ENCODE measurements at regions of chr3 and their contacts with region 1.

Region 1: DNA sequence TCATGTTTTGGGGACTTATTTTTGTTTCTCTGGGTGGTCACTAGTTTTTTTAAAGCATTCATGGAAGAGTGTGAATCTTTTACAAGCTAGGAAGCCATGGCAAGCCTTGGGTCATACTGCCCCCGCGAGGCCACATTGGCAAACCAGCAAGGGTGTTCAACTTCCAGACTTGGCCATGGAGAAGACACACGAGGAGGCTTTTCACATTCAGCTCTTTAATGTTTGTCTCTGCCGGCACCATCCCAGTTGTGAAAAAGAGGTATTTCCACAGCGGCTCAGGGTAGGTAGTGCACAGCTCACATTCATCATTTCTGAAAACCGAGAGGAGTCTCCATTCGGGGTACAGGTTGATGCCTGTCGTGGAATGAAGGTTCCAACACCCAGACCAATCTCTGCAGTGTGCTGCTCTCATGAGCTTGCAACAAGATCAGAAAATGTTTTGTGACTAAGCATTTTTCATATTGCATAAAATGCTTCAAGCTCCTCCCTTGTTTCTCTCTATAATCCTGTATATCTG is 7.7 kb downstream of the CCR5 start:
- DNase-seq: peak; percentile 49 to 95 (median 72)

Region 2: DNA sequence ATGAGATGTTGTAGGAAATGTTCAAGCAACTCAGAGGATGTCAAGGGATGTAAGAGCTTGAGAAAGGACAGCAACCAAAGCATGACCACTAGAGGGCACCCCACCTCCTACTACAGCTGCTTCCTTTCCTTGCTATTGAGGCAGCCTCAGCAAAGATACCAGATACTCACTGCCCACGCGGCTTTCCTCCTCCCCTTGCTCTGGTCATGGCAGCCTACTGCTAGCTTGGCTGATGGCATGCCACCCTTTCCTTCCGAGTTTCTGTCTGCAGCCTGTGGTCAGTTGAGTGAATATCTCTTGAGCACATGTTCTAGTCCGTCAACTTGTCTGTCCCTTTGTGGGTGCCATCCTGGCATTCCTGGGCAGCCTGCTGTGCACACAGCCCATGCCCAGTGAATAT is 439.6 kb before region 1 on chr3:
- intact Hi-C with region 1: loop called (anchors 10 kb)
- DNase-seq: peak; percentile 71 to 97 (median 88)

Region 3: DNA sequence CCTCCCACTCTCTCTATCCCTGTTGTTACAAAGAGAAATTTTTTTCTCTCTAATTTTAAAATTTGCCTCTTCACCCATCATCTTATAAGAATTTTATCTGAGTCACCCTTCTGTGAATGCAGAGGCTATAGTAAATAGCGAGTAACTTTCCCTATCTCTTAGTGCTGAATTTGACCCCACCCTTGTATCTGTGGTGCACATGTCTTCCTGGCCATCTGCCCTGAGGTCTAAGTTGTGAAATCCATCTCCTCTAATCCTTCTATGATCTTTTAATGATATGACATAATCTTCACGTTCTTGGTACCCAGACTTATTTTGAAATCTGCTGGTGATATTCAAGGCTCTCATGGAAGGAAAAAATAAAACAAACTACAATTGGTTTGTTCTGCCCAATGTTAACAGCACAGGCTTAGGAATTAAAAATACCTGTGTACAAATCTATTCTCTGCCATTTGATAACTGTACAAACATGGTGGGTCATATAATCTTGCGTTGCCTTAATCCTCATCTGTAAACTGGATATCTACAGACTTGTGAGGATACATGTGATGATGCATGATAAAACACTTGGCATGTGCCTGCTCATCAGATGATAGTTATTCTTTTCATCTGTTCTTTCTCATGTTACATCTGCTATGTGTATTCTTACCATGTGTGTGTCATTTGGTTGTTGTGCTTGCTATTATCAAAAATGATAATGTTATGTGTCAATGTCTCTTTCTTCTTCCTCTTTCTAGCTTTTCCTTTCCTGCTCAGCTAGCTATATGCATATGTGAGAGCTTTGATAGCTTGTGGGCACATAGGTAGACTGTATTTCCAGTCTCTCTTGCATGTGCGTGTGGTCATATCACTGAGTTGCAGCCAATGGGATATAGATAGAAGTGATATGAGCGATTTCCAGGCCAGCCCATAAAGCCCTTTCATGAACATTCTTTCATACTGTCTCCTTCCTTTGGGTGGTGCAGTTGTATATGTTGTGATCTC is 149.9 kb before region 1 on chr3:
- intact Hi-C with region 1: loop called (anchors 10 kb)
- DNase-seq: no peak

Region 4: DNA sequence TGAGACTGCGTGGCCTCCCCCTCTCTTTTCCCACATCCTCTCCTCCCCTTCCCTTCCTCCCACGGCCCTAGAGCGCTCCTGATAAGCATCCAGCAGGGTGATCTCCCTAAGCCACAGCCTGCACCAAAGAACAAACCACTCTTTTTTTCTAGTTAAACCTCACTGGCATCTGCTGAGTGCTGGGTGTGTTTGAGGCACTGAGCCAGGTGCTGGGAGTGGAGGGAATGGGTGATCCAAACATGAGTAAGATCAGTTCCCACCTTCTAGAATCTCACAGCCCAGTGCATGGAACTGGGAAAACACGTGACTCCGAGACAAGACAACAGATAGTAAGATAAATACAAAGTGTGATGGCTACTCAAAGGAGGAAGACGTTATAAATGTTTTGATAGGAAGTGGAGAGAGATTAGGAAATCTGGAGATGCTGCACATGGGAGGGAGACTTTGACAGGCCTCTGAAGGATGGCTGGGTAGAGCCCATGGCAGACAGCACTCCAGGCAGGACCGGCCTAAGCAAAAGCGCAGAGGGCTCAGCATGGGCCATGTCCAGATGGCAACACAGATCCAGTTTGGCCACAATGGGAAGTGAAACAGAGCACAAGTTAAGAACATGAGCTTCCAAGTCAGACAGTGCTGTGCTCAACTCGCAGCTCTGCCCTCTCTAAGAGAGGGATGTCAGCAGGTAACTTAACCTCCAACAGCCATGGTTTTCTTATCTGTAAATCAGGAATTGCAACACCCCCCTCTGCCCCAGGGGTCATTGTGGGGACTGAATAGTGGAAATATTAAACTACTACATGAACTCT is 80.6 kb before region 1 on chr3:
- intact Hi-C with region 1: loop called (anchors 10 kb)
- DNase-seq: no peak

Region 5: GRCh38 chr3:46395210-46395731 is 16.8 kb after region 1 on chr3:
- intact Hi-C with region 1: no loop called
- DNase-seq: no peak

Measured in posterior cingulate gyrus (tissue), 11 donors.